PC-9 (cell line): ENCODE measurements at regions of chr11 and their contacts with region 1.

Region 1: GRCh38 chr11:207208-207862 is at the starts of genes BET1L and RIC8A:
- DNase-seq: peak; percentile 89 to 95
- H3K4me3 ChIP-seq: peak within 1 kb of the TSS; percentile 67
- H3K27ac ChIP-seq: peak within 1 kb of the TSS; percentile 89
- H3K4me1 ChIP-seq: peaks cover 11% of the 10 kb centered on the region
- H3K27me3 ChIP-seq: no peaks in the 10 kb centered on the region
- CTCF ChIP-seq: no peak
- total RNA-seq, gene BET1L: 45.7 and 60.6 TPM in 2 replicates
- total RNA-seq, gene RIC8A: 115 and 129 TPM in 2 replicates

Region 2: GRCh38 chr11:244376-244775 is 37.0 kb after region 1 on chr11:
- CTCF ChIA-PET with region 1: no interaction called
- POLR2A ChIA-PET with region 1: no interaction called
- intact Hi-C with region 1: no loop called
- DNase-seq: no peak
- H3K4me3 ChIP-seq: no peak overlapping the region
- H3K27ac ChIP-seq: no peak overlapping the region
- H3K4me1 ChIP-seq: no peaks in the 10 kb centered on the region
- H3K27me3 ChIP-seq: no peaks in the 10 kb centered on the region
- CTCF ChIP-seq: no peak

Region 3: DNA sequence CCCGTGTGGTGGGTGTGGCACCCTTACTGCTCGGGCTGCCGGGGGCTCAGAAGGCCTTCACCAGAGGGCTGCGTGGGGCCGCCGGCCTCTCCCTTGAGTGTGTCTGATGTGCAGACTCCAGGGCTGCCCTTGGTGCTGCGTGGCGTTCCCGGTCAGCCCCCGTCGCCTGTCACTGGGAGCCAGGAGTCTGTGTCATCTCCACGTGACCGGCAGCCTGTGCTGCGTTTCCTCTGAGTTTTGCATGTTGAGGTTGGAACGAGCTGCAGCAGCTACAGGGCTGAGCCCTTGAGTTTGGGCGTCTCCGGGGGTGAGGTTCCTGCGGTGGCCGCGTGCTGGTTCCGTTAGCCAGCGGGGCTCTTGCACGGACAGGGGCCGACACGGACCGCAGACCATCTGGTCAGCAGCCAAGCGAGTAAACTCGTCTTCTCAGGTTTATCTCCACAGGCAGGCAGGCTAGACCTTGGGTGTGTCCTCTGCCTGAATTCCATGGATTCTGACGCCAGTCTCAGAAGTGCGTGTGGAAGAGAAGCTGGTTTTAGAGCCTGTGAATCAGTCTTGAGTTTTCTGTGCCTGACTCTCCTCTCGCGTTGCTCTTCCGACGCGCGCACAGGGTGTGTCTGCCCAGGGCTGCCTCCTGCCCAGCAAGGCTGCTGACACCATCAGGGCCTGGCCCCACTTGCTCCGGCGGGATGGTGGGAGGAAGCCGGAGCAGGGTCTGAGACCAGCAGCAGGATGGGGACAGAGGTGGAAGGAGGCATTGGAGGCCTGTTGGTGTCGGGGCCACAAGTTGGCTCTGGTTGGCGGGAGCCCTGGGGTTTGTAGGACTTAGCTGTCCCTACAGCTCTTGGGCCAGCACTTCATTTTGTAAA is 253.2 kb after region 1 on chr11:
- CTCF ChIA-PET with region 1: no interaction called
- POLR2A ChIA-PET with region 1: no interaction called
- intact Hi-C with region 1: loop called (anchors 5 kb)
- DNase-seq: peak; percentile 73 to 82
- H3K4me3 ChIP-seq: no peak overlapping the region
- H3K27ac ChIP-seq: peak overlapping the region; percentile 9; the same call in 1 of the 2 replicates
- H3K4me1 ChIP-seq: peaks cover 4% of the 10 kb centered on the region
- H3K27me3 ChIP-seq: no peaks in the 10 kb centered on the region
- CTCF ChIP-seq: no peak